ENCODE measurements at regions of chr3 and their contacts with region 1.

Region 1: DNA sequence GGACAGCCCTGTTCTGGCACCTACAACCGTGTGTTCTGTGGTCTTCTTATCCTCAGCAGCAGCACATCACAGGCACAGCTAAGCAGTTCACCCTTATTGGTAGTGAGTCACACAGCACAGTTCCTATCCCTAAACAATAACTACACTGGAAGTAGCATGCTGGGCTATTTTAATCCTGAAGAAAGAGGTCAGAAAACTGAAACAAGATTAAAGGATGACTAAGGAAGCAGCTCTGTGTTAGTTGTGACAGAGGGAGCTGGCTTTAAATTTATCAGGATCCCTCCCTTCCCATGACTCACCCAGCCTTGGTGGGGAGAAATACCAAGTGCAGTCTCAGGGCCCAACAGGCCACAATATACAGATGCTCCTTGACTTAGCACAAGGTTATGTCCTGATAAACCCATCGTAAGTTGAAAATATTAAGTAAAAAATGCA is 144.3 kb downstream of the ERC2 start:
- DNase-seq: no peak
- H3K4me3 ChIP-seq: no peak overlapping the region
- H3K27ac ChIP-seq: no peak overlapping the region
- H3K4me1 ChIP-seq: no peaks in the 10 kb centered on the region
- H3K27me3 ChIP-seq: no peaks in the 10 kb centered on the region
- CTCF ChIP-seq: no peak
- EP300 ChIP-seq: no peak
- POLR2A ChIP-seq: no peak

Region 2: DNA sequence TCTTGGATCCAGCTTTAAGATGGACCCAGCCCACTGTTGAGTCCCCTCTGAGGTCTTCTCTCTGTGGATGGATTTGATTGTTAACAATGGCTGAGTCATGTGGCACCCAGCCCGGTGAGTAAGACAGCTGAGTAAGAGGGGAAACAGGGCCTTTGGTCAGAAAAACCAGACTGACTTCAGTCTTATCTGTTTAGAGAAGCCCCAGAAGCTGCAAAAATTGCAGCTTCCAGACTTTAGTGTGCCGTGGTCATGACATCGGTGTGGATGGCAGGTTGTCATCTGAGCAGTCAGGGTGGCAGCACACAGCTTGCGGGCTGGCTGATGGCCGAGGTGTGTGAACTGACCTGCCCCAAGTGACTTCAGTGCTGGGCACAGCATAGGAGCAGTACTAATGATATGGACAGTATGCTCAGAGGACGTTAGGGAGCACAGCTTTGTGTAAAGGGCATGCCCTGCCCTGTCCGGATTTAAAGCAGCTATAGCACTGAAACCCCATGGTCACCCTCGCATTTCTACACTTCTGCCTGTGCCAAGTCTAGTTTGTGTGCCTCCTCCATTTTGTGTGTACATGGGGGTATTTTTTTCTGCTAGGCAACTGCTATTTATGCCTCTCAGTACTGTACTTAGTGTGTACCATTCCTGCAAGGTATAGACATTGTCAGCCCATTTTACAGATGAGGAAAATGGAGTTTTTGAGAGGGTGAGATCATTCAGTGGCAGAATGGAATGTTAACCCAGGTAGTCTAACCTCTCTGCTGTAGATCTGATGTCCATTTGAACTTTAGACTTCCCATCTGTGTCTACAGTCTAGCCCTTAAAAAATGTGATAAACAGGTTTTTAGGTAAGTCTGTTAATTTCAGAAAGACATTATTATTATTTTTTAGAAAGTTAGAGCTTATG is 1728.6 kb after region 1 on chr3:
- in situ Hi-C with region 1: no loop called
- intact Hi-C with region 1: loop called (anchors 10 kb)
- DNase-seq: peak; percentile 78
- H3K4me3 ChIP-seq: no peak overlapping the region
- H3K27ac ChIP-seq: peak overlapping the region; percentile 74 to 81 (median 80)
- H3K4me1 ChIP-seq: peaks cover 26 to 71% (median 33%) of the 10 kb centered on the region in 4 donors
- H3K27me3 ChIP-seq: no peaks in the 10 kb centered on the region
- CTCF ChIP-seq: no peak
- EP300 ChIP-seq: no peak
- POLR2A ChIP-seq: no peak

Measured in transverse colon (tissue), 4 donors.